HEK293 (cell line): ENCODE measurements at regions of chr15 and their contacts with region 1.

Region 1: DNA sequence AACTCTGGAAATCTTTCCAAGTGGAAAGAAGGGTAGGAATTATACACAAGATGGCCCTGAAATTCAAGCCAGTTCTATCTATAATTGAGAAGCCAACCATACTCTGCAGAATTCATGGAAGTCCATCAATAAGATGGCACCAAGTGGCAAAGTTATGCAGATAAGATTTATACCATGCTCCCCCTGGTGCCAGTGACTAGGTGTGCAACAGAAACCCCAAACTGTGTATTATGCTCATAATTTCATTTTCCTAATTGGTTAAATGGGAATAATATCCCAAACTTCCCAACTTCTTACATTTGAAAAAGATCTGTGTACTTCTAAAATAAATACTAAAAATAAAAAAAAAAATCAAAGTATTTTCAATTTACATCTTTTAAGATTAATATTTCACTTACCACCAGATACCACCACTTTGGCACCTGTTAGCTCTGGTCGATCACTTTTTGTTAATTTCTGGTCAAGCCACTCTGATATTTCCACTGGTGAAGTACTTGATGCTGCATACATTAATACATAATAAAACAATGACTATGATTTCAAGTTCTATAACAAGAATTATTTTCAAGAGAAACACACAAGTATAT is 25.9 kb downstream of the ETFA start:
- H3K4me3 ChIP-seq: no peak overlapping the region
- H3K27ac ChIP-seq: no peak overlapping the region
- H3K4me1 ChIP-seq: no peaks in the 10 kb centered on the region
- CTCF ChIP-seq: 0 out of 2 replicates have a peak, but pooled peaks have one; percentile 12

Region 2: DNA sequence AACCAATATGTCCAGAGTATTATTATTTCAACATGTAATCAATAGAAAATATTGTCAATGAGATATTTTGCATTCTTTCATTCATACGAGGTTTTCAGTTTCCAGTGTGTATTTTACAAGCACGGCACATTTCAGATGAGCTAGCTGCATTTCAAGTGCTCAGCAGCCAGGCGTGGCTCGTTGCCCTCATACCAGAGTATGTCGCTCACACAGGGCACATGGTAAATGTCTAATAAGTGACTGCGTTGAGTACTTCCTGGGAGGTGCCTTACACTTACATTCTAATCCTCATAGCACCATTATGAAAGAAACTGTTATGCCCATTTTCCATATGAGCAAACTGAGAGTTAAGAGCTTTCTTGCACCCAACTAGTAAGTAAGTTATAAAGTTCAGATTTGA is 178.2 kb before region 1 on chr15:
- CTCF ChIA-PET with region 1: no interaction called
- POLR2A ChIA-PET with region 1: no interaction called
- H3K4me3 ChIP-seq: no peak overlapping the region
- H3K27ac ChIP-seq: no peak overlapping the region
- H3K4me1 ChIP-seq: no peaks in the 10 kb centered on the region
- CTCF ChIP-seq: no peak

Region 3: GRCh38 chr15:76296849-76297248 is 11.5 kb after region 1 on chr15:
- CTCF ChIA-PET with region 1: interaction called, 10 read pairs
- POLR2A ChIA-PET with region 1: no interaction called
- H3K4me3 ChIP-seq: no peak overlapping the region
- H3K27ac ChIP-seq: no peak overlapping the region
- H3K4me1 ChIP-seq: peaks cover 18% of the 10 kb centered on the region
- CTCF ChIP-seq: no peak

Region 4: GRCh38 chr15:76529911-76530310 is 244.6 kb after region 1 on chr15:
- CTCF ChIA-PET with region 1: no interaction called
- POLR2A ChIA-PET with region 1: no interaction called
- H3K4me3 ChIP-seq: no peak overlapping the region
- H3K27ac ChIP-seq: no peak overlapping the region
- H3K4me1 ChIP-seq: peaks cover 2% of the 10 kb centered on the region; the same call in 1 of the 2 replicates
- CTCF ChIP-seq: no peak